Left colon (tissue), 2 donors: ENCODE measurements at regions of chr6 and their contacts with region 1.

Region 1: GRCh38 chr6:32933636-32934085 is 7.2 kb downstream of the HLA-DMB start:
- DNase-seq: peak; percentile 65 to 91
- ATAC-seq: peak; percentile 79

Region 2: DNA sequence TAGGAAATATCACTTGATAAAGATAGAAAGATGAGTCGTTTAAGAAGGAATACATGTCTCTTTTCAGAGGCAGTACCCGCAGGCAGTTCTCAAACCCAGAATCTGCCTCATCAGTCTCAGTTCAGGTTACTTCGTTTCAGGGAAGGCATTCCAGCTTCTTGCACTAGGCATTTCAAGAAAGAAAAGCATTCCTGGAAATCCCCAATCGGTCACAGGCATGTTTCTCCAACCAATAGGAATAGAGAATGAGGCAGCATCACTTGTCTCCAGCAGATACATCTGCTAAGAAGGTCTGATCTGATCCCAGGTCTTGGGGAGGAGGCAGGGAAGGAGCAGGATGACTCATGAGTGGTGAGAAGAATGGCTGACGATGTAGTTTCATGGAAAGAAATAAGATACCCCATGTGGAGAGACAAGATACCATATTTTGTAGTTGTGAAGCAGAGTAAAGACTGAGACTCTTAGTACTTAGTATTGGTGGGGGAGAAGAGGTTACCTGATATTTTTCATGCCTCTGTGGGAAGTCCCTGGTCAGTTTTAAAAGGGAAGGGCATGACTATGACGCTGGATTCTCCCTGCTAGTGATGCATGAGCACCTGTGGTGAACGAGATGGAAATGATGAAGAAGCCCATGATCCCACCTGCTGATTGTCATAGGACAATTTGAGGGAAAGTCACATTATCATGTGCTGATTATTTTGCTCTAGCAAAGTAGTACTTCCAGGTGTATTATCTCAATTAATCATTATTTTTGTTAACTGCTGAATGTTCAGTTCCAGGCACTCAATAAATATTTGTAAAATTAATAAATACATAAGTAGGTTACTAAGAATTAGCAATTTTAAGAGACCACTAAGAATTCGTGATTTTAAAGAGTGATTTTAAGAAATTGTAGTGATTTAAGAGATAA is 323.7 kb before region 1 on chr6:
- intact Hi-C with region 1: no loop called
- DNase-seq: peak; percentile 58 to 61
- ATAC-seq: peak; percentile 100

Region 3: GRCh38 chr6:32885698-32886286 is 47.9 kb before region 1 on chr6:
- intact Hi-C with region 1: loop called in 1 of 2 experiments (anchors 5 kb)
- DNase-seq: no peak
- ATAC-seq: peak; percentile 74